Psoas muscle (tissue), 8 donors: ENCODE measurements at regions of chr11 and their contacts with region 1.

Region 1: GRCh38 chr11:2074266-2074825 is 64.8 kb downstream of the IGF2 start:
- DNase-seq: no peak
- ATAC-seq: no peak
- H3K4me3 ChIP-seq: no peak overlapping the region
- H3K27ac ChIP-seq: no peak overlapping the region
- H3K4me1 ChIP-seq: peaks cover 1% of the 10 kb centered on the region
- H3K27me3 ChIP-seq: peaks cover 0 to 23% (median 2%) of the 10 kb centered on the region in 3 donors
- CTCF ChIP-seq: no peak

Region 2: GRCh38 chr11:1796413-1797011 is 277.8 kb before region 1 on chr11:
- intact Hi-C with region 1: no loop called
- DNase-seq: no peak
- ATAC-seq: no peak
- H3K4me3 ChIP-seq: no peak overlapping the region
- H3K27ac ChIP-seq: no peak overlapping the region
- H3K4me1 ChIP-seq: no peaks in the 10 kb centered on the region
- H3K27me3 ChIP-seq: peaks cover 0 to 31% (median 2%) of the 10 kb centered on the region in 3 donors
- CTCF ChIP-seq: no peak

Region 3: GRCh38 chr11:1917671-1918516 is 156.5 kb before region 1 on chr11:
- intact Hi-C with region 1: no loop called
- DNase-seq: peak; percentile 59 to 86
- ATAC-seq: peak; percentile 41 to 51 (median 46)
- H3K4me3 ChIP-seq: peak overlapping the region; percentile 53
- H3K27ac ChIP-seq: peak overlapping the region; percentile 94
- H3K4me1 ChIP-seq: peaks cover 63% of the 10 kb centered on the region
- H3K27me3 ChIP-seq: no peaks in the 10 kb centered on the region
- CTCF ChIP-seq: peak; percentile 79

Region 4: DNA sequence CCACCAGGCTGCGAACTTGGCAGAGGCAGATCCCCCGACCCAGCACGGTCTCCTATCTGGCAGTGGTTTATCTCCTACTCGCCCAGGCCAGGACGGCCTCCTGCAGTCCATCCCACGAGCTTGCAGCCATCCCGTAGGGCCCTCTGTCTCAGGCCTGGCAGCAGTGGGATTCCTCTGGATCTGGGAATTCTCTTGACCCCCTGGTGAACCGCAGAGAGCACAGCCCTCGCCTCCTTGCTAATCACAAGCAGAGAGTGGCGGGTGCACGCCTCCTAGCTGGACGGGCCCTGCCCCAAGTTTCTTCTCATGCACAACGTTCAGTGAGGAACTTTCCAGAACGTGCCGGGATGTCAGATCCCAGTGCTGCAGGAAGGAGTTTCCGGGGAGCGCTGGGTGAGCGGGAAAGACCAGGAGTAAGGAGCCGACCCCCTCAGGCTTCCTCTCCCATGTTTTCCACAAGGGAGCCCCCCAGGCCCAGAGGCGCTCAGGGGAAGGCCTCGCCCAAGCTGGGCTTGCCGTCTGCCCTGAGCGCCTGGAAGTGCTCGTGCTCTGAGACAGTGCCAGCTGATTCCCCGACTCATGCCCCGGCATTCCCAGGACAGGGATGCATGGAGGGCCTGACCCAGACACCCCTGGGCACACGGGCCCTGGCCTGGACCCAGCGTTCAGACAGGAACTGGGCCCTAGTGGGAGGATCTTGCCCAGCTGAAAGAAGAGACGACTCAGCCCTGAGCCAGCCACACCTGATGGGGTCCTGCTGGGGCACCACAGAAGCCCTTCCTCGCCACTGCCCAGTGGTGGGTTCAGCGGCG is 40.3 kb after region 1 on chr11:
- intact Hi-C with region 1: loop called in 1 of 2 experiments (anchors 5 kb)
- DNase-seq: peak in 1 of 2 donors; percentile 32
- ATAC-seq: no peak
- H3K4me3 ChIP-seq: no peak overlapping the region
- H3K27ac ChIP-seq: no peak overlapping the region
- H3K4me1 ChIP-seq: peaks cover 3% of the 10 kb centered on the region
- H3K27me3 ChIP-seq: peaks cover 0 to 2% (median 0%) of the 10 kb centered on the region in 3 donors
- CTCF ChIP-seq: no peak

Region 5: DNA sequence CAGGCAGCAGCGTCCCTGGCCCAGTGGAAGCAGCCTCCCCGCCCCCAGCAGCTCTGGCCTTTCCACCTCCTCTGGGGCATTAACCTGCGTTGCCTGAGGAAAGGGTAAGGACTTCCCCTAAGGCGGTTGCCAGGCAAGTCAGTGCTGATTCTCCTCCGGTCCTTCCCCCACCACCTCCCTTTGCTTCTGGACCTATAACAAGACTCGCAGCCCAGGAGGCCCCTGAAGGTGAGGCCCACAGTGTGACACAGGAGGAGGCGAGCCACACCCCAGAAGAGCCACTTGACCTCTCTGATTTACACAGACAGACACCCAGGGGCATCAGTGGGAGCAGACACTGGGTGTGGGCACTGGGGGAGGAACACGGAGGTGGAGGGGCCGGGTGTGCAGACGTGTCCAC is 160.6 kb after region 1 on chr11:
- intact Hi-C with region 1: no loop called
- DNase-seq: no peak
- ATAC-seq: no peak
- H3K4me3 ChIP-seq: no peak overlapping the region
- H3K27ac ChIP-seq: no peak overlapping the region
- H3K4me1 ChIP-seq: no peaks in the 10 kb centered on the region
- H3K27me3 ChIP-seq: no peaks in the 10 kb centered on the region
- CTCF ChIP-seq: no peak